ENCODE measurements at regions of chr17 and their contacts with region 1.

Region 1: GRCh38 chr17:47632991-47633390 is 16.7 kb upstream of the KPNB1 start:
- DNase-seq: no peak
- H3K4me3 ChIP-seq: no peak overlapping the region
- H3K27ac ChIP-seq: no peak overlapping the region
- H3K4me1 ChIP-seq: no peaks in the 10 kb centered on the region
- CTCF ChIP-seq: no peak

Region 2: GRCh38 chr17:46120078-46120477 is 1512.9 kb before region 1 on chr17:
- CTCF ChIA-PET with region 1: no interaction called
- POLR2A ChIA-PET with region 1: interaction called, 11 read pairs
- intact Hi-C with region 1: no loop called
- DNase-seq: no peak
- H3K4me3 ChIP-seq: no peak overlapping the region
- H3K27ac ChIP-seq: no peak overlapping the region
- H3K4me1 ChIP-seq: peaks cover 22% of the 10 kb centered on the region
- CTCF ChIP-seq: no peak

Region 3: DNA sequence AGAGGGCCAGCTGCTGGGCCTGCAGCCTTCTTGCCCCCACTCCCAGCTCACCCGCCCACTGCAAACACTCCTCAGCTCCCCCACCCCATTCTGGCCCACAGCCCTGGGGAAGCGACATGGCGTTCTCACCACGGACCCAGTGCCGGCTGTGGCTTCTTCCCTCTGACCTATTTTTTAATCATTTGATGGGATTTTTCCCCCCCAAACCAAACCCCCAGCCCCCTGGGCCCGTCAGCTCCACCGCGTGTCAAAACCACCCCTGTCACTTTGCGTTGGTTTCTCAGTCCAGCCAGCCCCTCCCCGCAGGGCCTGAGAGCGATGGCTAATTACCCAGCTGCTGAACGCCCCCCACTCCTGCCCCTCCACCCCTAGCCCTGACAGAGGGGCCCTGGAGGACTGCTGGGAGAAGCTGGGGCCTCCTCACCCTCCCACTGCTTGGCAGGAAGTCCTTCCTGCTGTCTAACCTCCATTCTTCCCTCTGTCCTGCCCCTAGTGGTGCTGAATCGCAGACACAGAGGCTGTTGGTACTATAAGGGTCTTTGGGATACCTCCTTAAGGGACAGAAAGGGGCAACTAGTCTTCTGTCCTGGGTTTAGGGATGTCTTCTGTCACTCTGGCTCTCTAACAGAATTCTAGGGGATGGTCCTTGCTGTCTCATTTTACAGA is 92.6 kb after region 1 on chr17:
- CTCF ChIA-PET with region 1: no interaction called
- POLR2A ChIA-PET with region 1: no interaction called
- intact Hi-C with region 1: no loop called
- DNase-seq: no peak
- H3K4me3 ChIP-seq: no peak overlapping the region
- H3K27ac ChIP-seq: no peak overlapping the region
- H3K4me1 ChIP-seq: no peaks in the 10 kb centered on the region
- CTCF ChIP-seq: peak; percentile 49; the same call in 1 of the 2 replicates

Measured in OCI-LY7 (cell line).